ENCODE measurements at regions of chr5 and their contacts with region 1.

Region 1: GRCh38 chr5:80407735-80408482 is at the start of gene ZFYVE16:
- DNase-seq: peak; percentile 95
- H3K4me3 ChIP-seq: peak within 1 kb of the TSS; percentile 72 to 98 (median 78)
- H3K27ac ChIP-seq: peak within 1 kb of the TSS; percentile 90
- H3K4me1 ChIP-seq: peaks cover 14% of the 10 kb centered on the region
- H3K27me3 ChIP-seq: no peaks in the 10 kb centered on the region
- CTCF ChIP-seq: peak; percentile 12 to 36
- total RNA-seq, gene ZFYVE16: 32.1 to 36.8 TPM

Region 2: DNA sequence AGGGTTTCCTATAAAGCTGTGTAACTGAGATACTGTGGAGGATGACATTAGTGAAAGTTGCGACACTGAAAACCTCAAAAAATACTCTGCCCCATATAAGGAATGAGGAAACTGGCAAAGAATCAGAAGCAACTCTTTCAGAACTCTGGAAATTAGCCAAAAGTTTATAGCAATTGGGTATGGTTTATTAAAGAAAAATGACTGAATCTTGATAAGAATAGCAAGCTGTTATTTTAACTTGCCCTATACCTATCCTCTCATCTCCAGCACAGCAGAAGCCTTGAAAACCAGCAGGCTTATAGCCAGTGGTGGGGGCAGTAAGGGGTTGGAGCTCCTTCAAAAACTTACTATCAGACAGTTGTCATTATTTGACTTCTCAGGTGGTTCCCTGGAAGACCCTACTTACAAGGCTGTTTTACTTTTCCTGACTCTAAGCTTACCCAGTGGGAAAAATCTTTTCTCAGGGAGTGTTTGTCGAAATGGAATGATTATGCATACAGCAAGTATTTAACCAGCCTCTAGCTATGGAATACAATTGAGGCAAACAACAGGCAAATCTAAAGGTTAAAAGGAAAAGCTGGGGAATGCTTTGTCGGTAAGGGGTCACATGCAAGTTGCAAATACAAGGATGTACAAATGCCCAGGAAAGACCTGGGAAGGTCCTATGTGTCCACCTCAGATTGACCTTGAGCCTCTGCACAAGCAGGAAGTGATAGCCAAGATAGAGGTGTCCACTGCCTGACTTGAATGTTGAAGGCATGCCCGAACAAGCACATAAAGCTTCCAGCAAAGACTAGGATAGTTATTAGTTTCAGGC is 59.0 kb after region 1 on chr5:
- CTCF ChIA-PET with region 1: no interaction called
- dilution Hi-C with region 1: no loop called
- in situ Hi-C with region 1: no loop called
- intact Hi-C with region 1: loop called (anchors 5 kb)
- DNase-seq: peak; percentile 64
- H3K4me3 ChIP-seq: peak overlapping the region in 1 of 3 experiments; percentile 21
- H3K27ac ChIP-seq: peak overlapping the region; percentile 76
- H3K4me1 ChIP-seq: peaks cover 24% of the 10 kb centered on the region
- H3K27me3 ChIP-seq: no peaks in the 10 kb centered on the region
- CTCF ChIP-seq: no peak